ENCODE measurements at regions of chr5 and their contacts with region 1.

Region 1: DNA sequence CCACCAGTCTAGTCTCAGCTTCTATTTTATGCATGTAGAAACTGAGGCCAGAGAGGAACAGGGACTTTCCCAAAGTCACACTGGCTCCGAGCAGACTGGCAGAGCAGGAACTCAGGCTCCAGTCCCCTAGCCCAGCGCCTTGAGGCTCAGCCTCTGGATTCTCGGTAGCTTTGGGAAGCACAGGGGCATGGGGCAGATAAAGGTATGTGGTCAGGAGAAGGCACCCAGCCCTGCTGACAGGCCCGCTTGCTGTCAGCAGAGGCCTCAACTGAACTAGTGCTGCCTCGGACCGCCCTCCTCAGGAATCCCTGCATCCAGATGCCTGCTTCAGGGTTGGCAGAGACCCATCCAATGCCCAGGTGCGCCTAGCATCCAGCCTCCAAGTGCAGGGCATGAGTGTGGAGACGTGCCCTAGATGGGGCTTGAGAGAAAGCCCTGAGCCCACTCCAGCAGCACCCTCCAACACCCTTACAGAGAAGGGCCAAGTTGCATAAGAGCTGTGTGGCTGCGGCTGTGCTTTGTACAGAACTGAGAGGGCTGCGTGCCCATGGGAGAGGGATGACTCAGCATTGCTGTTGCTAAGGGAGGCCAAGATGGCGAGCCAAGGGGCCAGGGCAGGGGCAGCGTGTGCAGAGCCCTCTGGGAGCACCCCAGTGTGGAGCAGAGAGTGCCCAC is 168.6 kb downstream of the MACROH2A1 start:
- DNase-seq: peak; percentile 49 to 75
- ATAC-seq: peak; percentile 75 to 79
- H3K4me3 ChIP-seq: no peak overlapping the region
- H3K27ac ChIP-seq: peak overlapping the region; percentile 52 to 73 (median 66)
- H3K4me1 ChIP-seq: peaks cover 27 to 31% of the 10 kb centered on the region in 2 donors
- H3K27me3 ChIP-seq: no peaks in the 10 kb centered on the region
- CTCF ChIP-seq: no peak
- POLR2A ChIP-seq: no peak

Region 2: GRCh38 chr5:135373736-135374515 is 143.5 kb after region 1 on chr5:
- in situ Hi-C with region 1: no loop called
- intact Hi-C with region 1: loop called (anchors 5 kb)
- DNase-seq: peak; percentile 81 to 86
- ATAC-seq: peak; percentile 93 to 95
- H3K4me3 ChIP-seq: peak overlapping the region in 1 of 4 donors; percentile 12
- H3K27ac ChIP-seq: peak overlapping the region; percentile 89 to 93 (median 90)
- H3K4me1 ChIP-seq: peaks cover 32 to 35% of the 10 kb centered on the region in 2 donors
- H3K27me3 ChIP-seq: no peaks in the 10 kb centered on the region
- CTCF ChIP-seq: no peak
- POLR2A ChIP-seq: no peak